Activated B cell treated with CpG ODN at 0.5 μM for 24 hours (primary cell): ENCODE measurements at regions of chr7 and their contacts with region 1.

Region 1: DNA sequence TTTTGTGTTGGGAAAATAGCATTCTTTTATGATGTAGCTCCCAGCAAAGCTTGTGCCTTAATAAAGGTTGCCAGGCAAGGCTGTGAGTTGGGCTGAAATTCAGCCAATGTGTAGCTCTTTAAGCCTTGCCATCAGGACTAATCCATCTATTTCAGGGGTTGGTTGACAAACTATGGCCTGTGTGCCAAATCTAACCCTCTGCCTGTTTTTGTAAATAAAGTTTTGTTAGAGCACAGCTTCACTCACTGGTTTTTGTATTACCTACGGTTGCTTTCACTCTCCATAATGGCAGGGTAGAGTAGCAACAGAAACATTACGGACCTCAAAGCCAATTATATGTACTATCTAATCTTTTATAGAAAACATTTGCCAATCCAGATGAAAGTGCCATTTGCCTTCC is 638.1 kb upstream of the POT1 start:
- DNase-seq: no peak
- ATAC-seq: no peak
- H3K4me3 Mint-ChIP-seq: no peak overlapping the region
- H3K27ac Mint-ChIP-seq: no peak overlapping the region
- H3K4me1 Mint-ChIP-seq: no peaks in the 10 kb centered on the region
- H3K27me3 Mint-ChIP-seq: no peaks in the 10 kb centered on the region
- CTCF ChIP-seq: no peak

Region 2: GRCh38 chr7:125592331-125592730 is 24.6 kb after region 1 on chr7:
- CTCF ChIA-PET with region 1: no interaction called
- POLR2A ChIA-PET with region 1: no interaction called
- intact Hi-C with region 1: loop called (anchors 2 kb)
- DNase-seq: no peak
- ATAC-seq: no peak
- H3K4me3 Mint-ChIP-seq: no peak overlapping the region
- H3K27ac Mint-ChIP-seq: no peak overlapping the region
- H3K4me1 Mint-ChIP-seq: no peaks in the 10 kb centered on the region
- H3K27me3 Mint-ChIP-seq: no peaks in the 10 kb centered on the region
- CTCF ChIP-seq: no peak